ENCODE measurements at regions of chr12 and their contacts with region 1.

Region 1: DNA sequence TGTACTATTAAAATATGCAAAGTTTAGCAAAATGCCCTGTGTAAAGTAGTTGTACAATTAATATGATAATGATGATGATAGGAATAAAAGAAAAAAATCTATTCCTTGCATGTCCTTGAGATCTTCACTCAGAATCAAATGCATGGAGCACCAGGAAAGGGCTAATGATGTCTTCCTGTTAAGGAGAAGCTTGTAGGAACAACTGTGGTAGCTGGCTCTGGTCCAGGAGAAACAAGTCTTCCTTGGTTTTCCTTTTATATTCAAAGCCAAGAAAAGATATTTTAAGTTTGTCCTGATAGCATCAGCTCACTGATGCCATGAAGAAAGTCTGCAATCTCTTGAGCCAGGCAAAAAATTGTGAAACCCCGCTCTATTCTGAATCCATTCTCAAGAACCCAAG is 138.9 kb downstream of the PIK3C2G start:
- DNase-seq: no peak
- H3K4me3 Mint-ChIP-seq: no peak overlapping the region
- H3K27ac Mint-ChIP-seq: no peak overlapping the region
- H3K4me1 Mint-ChIP-seq: no peaks in the 10 kb centered on the region
- H3K27me3 Mint-ChIP-seq: no peaks in the 10 kb centered on the region
- CTCF ChIP-seq: no peak

Region 2: GRCh38 chr12:18339633-18340032 is 60.6 kb before region 1 on chr12:
- CTCF ChIA-PET with region 1: no interaction called
- intact Hi-C with region 1: loop called (anchors 2 kb)
- DNase-seq: no peak
- H3K4me3 Mint-ChIP-seq: no peak overlapping the region
- H3K27ac Mint-ChIP-seq: no peak overlapping the region
- H3K4me1 Mint-ChIP-seq: no peaks in the 10 kb centered on the region
- H3K27me3 Mint-ChIP-seq: no peaks in the 10 kb centered on the region
- CTCF ChIP-seq: no peak

Region 3: GRCh38 chr12:18612971-18613370 is 212.8 kb after region 1 on chr12:
- CTCF ChIA-PET with region 1: no interaction called
- intact Hi-C with region 1: no loop called
- DNase-seq: no peak
- H3K4me3 Mint-ChIP-seq: no peak overlapping the region
- H3K27ac Mint-ChIP-seq: no peak overlapping the region
- H3K4me1 Mint-ChIP-seq: no peaks in the 10 kb centered on the region
- H3K27me3 Mint-ChIP-seq: no peaks in the 10 kb centered on the region
- CTCF ChIP-seq: no peak